HEK293 (cell line): ENCODE measurements at regions of chr22 and their contacts with region 1.

Region 1: DNA sequence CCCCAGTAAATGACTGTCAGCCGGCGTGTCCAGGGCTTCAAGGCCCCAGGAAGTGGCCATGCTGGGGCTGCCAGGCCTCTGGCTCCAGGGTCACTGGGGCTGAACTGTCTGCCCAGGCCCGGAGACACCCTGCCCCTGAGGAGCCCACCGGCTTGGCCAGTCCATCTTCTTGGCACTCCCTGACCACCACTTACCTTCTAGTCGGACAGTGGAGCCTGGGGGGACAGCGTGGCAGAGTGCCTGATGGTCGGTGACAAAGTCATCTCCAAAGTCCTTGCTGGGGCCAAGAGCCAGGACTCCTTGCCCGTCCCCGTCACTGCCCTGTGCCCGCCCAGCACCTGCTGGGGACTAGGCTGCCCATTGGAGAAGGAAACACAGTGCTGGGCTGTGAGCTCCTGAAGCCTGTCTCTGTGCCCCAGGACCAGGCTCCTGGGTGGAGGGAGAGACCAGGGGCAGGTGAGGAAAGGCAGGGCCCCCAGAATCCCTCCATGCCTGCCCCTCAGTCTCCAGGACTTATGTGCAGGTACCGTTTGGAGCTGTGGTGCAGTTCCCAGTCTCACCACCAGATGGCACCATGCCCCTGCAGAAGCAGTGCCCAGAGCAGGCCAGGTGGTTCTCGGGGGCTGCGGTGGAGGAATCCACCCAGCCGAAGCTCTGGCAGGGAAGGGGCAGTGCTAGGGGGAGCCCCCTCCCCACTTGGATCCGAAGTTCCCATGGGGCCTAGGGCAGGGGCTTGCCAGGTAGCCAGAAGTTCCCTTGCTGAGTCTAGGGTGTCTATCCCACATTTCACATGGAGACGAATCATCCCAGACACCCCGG is 6.0 kb upstream of the CCDC188 start:
- H3K4me3 ChIP-seq: no peak overlapping the region
- H3K27ac ChIP-seq: no peak overlapping the region
- H3K4me1 ChIP-seq: no peaks in the 10 kb centered on the region
- CTCF ChIP-seq: peak; percentile 98

Region 2: DNA sequence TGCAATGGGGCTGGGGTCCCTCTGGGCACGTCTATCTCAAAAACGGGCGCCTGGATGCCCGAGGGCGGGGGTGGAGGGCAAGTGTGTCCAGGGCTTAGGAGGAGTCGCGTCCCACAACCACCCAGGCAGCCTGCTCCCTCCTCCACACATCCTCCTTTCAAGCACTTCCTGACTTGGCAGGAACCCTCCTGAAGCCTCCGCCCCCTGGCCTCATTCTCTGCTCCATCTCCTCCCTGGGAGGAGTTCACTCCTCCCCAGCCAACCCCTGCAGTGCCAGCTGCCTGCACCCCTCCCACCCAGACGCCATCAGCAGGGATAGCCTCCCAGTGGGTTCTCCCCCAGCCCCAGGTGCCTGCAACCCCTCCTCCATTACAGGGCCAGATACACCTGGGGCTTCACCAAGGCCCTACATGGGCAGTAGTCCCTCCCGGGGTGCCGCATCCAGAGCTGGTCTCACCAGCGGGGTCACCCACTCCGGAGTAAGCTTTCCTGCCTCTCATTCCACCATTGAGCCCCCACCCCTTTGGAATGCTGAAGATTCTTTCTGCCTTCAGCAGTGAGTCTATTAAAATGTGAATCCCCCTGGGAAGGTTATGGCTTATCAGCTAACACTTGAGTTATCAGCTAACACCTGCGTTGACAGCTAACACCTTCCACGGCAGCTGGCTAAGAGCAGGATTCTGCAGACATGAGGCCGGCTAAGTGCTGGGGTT is 86.9 kb after region 1 on chr22:
- CTCF ChIA-PET with region 1: interaction called, 57 read pairs
- POLR2A ChIA-PET with region 1: interaction called, 10 read pairs
- H3K4me3 ChIP-seq: no peak overlapping the region
- H3K27ac ChIP-seq: peak overlapping the region; percentile 45; the same call in 1 of the 2 replicates
- H3K4me1 ChIP-seq: peaks cover 21% of the 10 kb centered on the region
- CTCF ChIP-seq: no peak

Region 3: GRCh38 chr22:20283674-20284066 is 126.8 kb after region 1 on chr22:
- CTCF ChIA-PET with region 1: interaction called, 64 read pairs
- POLR2A ChIA-PET with region 1: interaction called, 3 read pairs
- H3K4me3 ChIP-seq: no peak overlapping the region
- H3K27ac ChIP-seq: no peak overlapping the region
- H3K4me1 ChIP-seq: no peaks in the 10 kb centered on the region
- CTCF ChIP-seq: no peak

Region 4: DNA sequence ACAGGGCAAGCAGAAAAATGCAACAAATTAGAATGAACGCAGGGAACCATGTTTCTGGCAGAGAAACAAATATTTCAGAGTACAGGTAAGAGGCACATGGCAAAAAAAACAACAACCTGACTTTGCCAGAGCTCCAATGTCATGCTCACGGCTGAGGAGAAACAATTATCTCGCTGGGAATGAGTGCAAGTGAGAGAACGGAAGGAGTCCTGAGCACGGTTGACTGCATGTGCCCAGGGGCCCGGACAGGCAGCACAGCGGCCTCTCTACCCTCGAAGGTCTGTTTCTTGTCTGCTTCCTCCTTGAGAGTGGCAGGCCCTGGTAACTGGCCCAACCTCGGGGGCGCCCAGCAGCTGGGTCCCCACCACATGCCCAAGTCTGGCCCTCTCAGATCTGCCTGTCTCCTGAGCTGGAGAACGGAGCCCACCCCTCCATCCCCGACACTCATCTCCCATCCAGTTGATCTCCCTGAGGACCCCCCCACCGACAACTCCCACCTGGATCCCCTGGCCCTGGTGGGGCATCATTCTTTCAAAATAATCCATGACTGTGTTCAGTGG is 135.9 kb after region 1 on chr22:
- CTCF ChIA-PET with region 1: interaction called, 17 read pairs
- POLR2A ChIA-PET with region 1: no interaction called
- H3K4me3 ChIP-seq: no peak overlapping the region
- H3K27ac ChIP-seq: no peak overlapping the region
- H3K4me1 ChIP-seq: no peaks in the 10 kb centered on the region
- CTCF ChIP-seq: no peak

Region 5: DNA sequence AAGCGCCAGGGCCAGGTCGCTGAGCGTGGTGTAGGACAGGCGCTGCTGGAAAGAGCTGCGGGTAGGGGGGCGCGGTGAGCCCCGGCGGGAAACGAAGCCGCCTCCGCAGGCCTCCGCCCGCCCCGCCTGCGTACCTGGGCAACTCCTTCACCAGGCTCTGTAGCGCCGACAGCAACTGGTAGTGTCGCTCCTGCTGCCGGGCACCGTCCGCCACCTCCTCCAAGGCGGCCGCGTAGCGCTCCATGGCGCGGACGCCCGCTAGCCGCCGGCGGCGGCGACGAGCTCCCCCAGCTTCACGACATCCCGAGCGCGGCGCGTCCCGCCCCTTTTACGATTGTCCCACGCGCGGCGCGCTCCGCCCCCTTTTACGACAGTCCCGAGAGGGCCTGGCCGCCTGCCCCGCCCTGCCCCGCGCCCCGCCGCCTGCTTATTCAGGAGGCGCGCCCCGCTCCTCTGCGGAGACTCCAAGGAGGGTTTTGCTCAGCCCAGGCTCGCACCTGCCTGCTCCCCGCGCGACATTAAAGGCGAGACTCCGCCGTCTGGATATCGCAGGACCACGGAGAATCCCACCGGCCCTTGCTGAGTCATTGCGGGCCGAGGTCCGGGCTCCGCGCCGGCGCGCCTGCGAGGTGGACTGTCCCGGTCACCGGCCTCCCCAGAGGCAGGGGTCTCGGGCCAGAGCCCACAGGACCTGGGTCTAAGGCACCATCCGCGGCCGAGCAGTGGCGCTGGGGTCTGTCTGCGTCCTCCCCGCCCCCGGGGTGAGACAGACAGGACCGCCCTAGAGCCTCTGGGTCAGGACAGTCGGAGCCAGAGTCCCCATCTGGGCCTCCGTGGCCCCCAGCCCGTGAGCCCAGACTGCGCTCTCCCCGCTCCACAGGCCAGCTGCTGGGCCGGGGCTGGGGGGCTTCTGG is 163.2 kb after region 1 on chr22 and contains the start of gene DGCR6L:
- CTCF ChIA-PET with region 1: interaction called, 20 read pairs
- POLR2A ChIA-PET with region 1: no interaction called
- H3K4me3 ChIP-seq: peak within 1 kb of the TSS; percentile 96
- H3K27ac ChIP-seq: peak within 1 kb of the TSS; percentile 89
- H3K4me1 ChIP-seq: peaks cover 4% of the 10 kb centered on the region; the same call in 1 of the 2 replicates
- CTCF ChIP-seq: no peak